ENCODE measurements at regions of chr11 and their contacts with region 1.

Region 1: DNA sequence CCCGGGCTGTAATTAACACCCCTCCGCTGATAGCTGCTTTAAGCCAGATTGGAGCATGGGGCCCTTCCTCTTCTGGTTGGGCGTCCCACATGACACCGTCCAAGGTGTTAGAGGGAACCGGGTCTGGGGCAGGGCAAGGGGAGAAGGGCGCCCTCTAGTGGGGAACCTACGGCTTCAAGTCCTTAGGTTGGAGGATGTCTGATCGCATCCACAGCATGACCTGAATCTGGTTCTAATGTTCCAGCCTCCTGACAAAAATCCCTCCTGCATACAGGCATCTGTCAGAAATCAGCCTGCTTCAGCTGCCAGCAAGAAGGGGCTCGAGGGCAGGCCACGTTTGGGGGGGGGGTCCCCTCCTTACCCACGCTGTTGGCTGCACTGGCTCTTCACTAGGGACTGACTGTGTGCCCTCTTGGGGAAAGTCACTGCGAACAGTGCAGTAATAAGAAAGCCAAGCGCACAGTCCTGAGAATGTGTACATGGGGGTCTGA is 94.2 kb upstream of the TBCEL start:
- DNase-seq: peak; percentile 30
- ATAC-seq: peak; percentile 93
- H3K4me3 ChIP-seq: no peak overlapping the region
- H3K27ac ChIP-seq: no peak overlapping the region
- H3K4me1 ChIP-seq: no peaks in the 10 kb centered on the region
- H3K27me3 ChIP-seq: no peaks in the 10 kb centered on the region
- CTCF ChIP-seq: peak; percentile 94

Region 2: GRCh38 chr11:120511116-120511819 is 418.4 kb before region 1 on chr11 and contains the start of gene GRIK4:
- CTCF ChIA-PET with region 1: interaction called, 4 read pairs
- POLR2A ChIA-PET with region 1: no interaction called
- in situ Hi-C with region 1: no loop called
- intact Hi-C with region 1: loop called (anchors 5 kb)
- DNase-seq: peak; percentile 22
- ATAC-seq: peak; percentile 94
- H3K4me3 ChIP-seq: peak within 1 kb of the TSS; percentile 41 to 42
- H3K27ac ChIP-seq: no peak within 1 kb of the TSS
- H3K4me1 ChIP-seq: peaks cover 3% of the 10 kb centered on the region
- H3K27me3 ChIP-seq: peaks cover 3% of the 10 kb centered on the region
- CTCF ChIP-seq: peak; percentile 96
- total RNA-seq, gene GRIK4: 0.62 TPM

Region 3: DNA sequence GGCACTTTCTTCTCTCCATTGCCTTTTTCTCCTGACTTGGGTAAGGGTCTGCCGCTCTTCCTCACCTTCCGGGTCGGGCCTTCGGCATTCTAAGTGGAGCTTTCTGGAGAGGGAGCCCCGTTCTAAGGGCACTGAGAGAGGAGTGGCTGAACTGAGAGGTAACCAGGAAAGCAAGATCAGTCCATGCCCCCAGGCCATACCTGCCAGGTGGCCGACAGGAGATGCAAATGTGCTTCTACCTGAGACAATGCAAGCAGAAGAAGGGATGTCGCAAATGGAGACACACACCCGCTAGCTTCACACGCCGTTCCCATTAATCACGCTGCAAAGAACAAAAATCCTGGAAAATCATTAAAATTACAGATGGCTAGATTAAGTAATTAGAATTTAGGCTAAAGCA is 62.2 kb before region 1 on chr11:
- CTCF ChIA-PET with region 1: no interaction called
- POLR2A ChIA-PET with region 1: no interaction called
- in situ Hi-C with region 1: no loop called
- intact Hi-C with region 1: loop called (anchors 2 kb)
- DNase-seq: no peak
- ATAC-seq: no peak
- H3K4me3 ChIP-seq: no peak overlapping the region
- H3K27ac ChIP-seq: no peak overlapping the region
- H3K4me1 ChIP-seq: no peaks in the 10 kb centered on the region
- H3K27me3 ChIP-seq: peaks cover 6% of the 10 kb centered on the region; the same call in 1 of the 2 replicates
- CTCF ChIP-seq: no peak

Region 4: DNA sequence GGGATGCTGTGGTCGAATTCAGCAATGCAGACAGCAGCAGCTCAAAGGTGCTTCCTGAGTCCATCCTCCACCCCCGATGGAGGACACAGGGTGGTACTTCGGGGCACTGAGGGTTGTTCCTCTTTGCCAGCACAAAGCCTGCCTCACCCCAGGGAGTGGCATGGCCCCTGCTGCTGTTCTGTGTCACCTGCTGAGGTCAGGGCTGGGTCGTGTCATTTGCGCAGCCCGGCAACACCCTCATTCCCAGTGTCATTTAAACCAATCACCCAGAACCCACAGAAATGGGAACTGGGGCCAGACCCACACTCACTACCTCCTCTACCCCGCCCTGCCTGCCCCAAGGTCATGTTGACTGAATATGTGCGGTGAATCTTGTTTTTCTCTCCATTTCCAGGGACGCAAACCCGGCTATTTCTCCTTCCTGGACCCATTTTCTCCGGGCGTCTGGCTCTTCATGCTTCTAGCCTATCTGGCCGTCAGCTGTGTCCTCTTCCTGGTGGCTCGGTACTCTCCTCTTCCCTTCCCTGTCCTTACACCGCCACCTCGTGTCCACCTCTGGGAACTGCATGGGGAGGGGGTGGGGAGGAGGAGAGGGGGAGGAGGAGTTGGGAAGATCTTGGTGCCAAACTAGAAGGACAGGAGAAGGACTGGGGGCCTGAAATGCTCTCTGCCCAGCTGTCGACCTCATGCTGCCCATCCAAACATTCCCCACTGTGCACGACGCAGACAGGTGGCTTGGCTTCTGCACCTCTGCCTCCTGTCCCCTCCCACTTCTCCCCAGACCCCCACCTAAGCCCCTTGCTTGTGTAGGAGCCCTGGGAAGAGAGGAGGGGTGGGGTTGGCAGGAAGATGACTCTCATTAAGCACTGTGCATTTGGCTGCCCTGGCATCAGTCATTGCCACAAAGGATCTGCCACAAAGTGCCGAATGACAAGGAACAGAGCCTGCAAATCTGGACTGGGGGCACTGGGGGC is 23.0 kb after region 1 on chr11:
- CTCF ChIA-PET with region 1: interaction called, 10 read pairs
- POLR2A ChIA-PET with region 1: interaction called, 4 read pairs
- in situ Hi-C with region 1: no loop called
- intact Hi-C with region 1: no loop called
- DNase-seq: peak; percentile 51
- ATAC-seq: peak; percentile 90
- H3K4me3 ChIP-seq: peak overlapping the region in 1 of 2 experiments; percentile 10; a peak in 1 of 4 replicates
- H3K27ac ChIP-seq: no peak overlapping the region
- H3K4me1 ChIP-seq: no peaks in the 10 kb centered on the region
- H3K27me3 ChIP-seq: peaks cover 28% of the 10 kb centered on the region
- CTCF ChIP-seq: peak; percentile 95

Region 5: GRCh38 chr11:121112498-121113455 is 183.1 kb after region 1 on chr11:
- CTCF ChIA-PET with region 1: no interaction called
- POLR2A ChIA-PET with region 1: no interaction called
- in situ Hi-C with region 1: no loop called
- intact Hi-C with region 1: loop called (anchors 5 kb)
- DNase-seq: no peak
- ATAC-seq: peak; percentile 97
- H3K4me3 ChIP-seq: no peak overlapping the region
- H3K27ac ChIP-seq: no peak overlapping the region
- H3K4me1 ChIP-seq: 0 out of 2 replicates have a peak, but pooled peaks cover 3% of the 10 kb centered on the region
- H3K27me3 ChIP-seq: peaks cover 33% of the 10 kb centered on the region
- CTCF ChIP-seq: peak; percentile 86

Region 6: DNA sequence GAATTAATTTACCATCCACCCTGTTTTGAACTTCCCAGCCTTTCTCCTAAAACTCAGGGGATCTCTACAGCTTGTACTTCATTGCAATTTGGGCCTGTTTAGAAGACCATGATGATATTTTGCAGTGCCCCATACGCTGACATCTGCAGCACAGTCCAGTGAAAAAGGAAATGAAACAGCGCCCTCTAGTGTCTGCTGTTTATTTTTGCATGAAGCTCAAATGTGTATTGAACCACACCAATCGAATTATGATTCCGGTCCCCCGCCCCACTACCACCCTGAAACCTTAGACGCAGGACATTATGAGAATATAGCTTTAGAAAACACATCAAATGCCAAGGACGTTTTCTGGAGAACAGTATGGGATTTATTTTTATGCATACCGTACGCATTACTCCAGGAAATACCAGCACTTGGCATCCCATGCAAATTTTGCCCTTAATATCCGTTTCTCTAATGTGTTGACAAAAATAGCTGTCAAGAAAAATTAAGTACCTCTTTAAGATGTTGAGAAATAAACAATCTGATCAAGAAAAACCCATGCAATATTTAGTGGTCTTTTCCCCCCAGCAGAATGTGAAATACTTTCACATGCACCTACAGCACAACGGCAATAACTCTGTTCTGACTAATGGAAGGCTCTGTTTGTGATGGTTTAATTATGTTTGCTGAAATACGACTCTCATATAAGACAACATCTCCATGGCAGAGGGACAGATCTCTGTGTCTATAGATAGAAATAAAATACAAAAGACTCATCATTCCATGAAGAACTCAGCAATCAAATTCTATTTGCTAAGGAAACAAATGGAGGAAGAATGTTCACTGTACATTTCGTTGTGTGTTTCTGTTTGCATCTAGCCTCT is 265.3 kb after region 1 on chr11:
- CTCF ChIA-PET with region 1: no interaction called
- POLR2A ChIA-PET with region 1: no interaction called
- in situ Hi-C with region 1: no loop called
- intact Hi-C with region 1: loop called (anchors 5 kb)
- DNase-seq: peak; percentile 46
- ATAC-seq: peak; percentile 97
- H3K4me3 ChIP-seq: no peak overlapping the region
- H3K27ac ChIP-seq: no peak overlapping the region
- H3K4me1 ChIP-seq: no peaks in the 10 kb centered on the region
- H3K27me3 ChIP-seq: peaks cover 28% of the 10 kb centered on the region
- CTCF ChIP-seq: peak; percentile 91